Left colon (tissue), 2 donors: ENCODE measurements at regions of chr22 and their contacts with region 1.

Region 1: DNA sequence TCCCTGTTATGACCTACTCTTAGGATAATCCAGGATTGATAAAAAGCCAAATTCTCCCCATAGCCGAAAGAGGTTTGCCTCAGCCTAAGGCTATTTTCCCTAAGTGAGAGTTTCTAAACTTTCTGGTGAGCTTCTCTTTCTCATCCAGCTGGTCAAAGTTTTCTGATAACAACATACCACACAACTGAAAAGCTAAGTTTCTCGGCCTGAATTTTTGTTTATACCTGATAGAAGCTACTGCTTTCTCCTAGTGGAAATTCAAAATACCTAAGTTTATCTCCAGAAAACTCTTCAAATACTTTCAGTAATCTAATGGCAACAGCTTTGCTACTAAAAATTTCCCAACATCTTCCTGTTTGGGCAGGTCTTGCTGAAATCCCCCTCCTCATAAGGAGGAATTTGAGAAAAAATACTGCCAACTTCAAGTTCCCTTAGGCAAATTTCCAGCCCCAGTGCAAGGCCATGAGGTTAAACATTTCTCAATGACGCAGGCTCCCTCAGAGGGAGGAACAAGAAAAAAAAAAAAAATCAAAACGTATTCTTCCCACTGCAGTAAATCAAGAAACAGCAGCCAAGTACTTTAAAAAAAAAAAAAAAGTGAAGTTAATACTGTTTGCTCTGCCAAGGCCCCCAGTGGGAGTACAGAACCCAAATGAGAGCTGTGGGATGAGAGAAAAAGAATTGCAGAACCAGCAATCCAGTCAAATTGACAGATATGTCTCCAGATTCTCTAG is 127.0 kb downstream of the MRTFA start:
- DNase-seq: peak; percentile 10 to 41
- ATAC-seq: peak; percentile 85

Region 2: GRCh38 chr22:40636380-40637182 is 127.0 kb after region 1 on chr22 and contains the start of gene MRTFA:
- intact Hi-C with region 1: loop called in 1 of 2 experiments (anchors 10 kb)
- DNase-seq: peak; percentile 100
- ATAC-seq: peak; percentile 91
- total RNA-seq, gene MRTFA: 42.1 to 44.4 TPM

Region 3: DNA sequence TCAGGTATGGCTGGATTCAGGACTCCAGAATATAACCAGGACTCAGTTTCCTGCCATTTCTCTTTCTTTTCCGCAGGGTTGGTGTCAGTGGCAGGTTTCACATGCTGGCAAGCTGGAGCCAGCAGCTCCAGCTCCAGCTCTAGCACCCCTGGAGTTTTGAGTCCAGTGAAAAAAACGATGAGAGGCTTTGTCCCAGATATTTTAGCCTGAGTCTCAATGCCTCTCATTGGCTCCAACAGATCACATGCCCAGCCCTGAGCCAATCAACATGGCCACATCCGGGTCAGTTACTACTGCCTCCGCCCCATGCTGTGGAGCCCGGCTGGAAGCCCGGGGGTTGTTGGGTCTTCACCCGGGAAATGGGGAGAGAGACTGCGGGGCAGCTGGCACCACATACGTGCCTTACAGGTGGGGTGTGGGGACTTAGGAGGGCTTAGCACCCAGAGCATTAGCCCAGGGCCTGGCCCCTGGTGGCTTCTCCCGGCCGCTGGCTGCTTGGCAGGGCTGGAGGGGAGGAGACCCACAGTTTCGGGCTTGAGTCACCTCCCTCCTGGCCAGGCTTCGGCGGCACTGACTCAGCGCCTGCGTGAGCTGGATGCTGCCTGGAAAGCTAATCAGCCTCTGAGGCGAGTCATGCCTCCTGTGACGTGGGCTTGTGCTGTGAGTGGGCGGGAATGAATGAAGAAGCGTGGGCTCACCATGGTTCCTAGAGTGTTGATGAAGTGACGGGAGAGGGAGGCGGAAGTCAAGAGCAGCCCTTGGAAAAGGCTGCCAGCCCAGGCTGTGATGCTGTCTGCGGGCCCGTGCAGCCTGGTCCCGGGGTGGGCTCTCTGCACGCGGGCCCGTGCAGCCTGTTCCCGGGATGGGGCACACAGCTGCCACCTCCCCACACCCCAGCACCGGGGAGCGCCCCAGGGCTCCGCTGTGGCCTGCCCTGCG is 142.3 kb after region 1 on chr22:
- intact Hi-C with region 1: no loop called
- DNase-seq: peak; percentile 77 to 92
- ATAC-seq: peak; percentile 73

Region 4: DNA sequence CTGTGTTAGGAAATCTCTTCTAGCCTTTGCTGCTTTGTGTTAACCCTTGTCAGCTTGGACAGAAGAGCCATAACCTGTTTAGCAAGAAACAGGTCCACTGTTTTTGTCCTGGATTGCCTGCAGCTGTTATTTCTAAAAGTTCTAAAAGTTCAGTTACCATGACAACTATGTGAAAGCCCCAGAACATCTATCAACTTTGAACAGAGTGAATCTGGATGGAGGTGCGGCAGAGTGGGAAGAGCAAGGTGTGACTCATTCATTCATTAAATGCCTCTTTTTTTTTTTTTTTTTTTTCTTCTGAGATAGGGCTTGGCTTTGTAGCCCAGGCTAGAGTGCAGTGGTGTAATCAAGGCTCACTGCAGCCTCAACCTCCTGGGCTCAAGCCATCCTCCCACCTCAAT is 492.2 kb after region 1 on chr22:
- intact Hi-C with region 1: no loop called
- DNase-seq: no peak
- ATAC-seq: peak; percentile 51